ENCODE measurements at regions of chr13 and their contacts with region 1.

Region 1: GRCh38 chr13:55000043-55000442 is 1971.4 kb downstream of the OLFM4 start:
- DNase-seq: no peak
- ATAC-seq: no peak

Region 2: GRCh38 chr13:54640719-54641118 is 359.3 kb before region 1 on chr13:
- intact Hi-C with region 1: loop called (anchors 5 kb)
- DNase-seq: no peak
- ATAC-seq: no peak